Transverse colon (tissue), 4 donors: ENCODE measurements at regions of chr5 and their contacts with region 1.

Region 1: GRCh38 chr5:141691867-141692532 is 10.0 kb upstream of the ARAP3 start:
- DNase-seq: peak; percentile 91
- H3K4me3 ChIP-seq: peak overlapping the region in 2 of 4 donors; percentile 17 to 32
- H3K27ac ChIP-seq: no peak overlapping the region
- H3K4me1 ChIP-seq: peaks cover 4 to 12% (median 4%) of the 10 kb centered on the region in 4 donors
- H3K27me3 ChIP-seq: no peaks in the 10 kb centered on the region
- CTCF ChIP-seq: peak; percentile 98 to 100 (median 99)
- EP300 ChIP-seq: no peak
- POLR2A ChIP-seq: no peak

Region 2: GRCh38 chr5:140800816-140801493 is 891.0 kb before region 1 on chr5 and contains the start of gene PCDHA3:
- in situ Hi-C with region 1: no loop called
- intact Hi-C with region 1: no loop called
- DNase-seq: no peak
- H3K4me3 ChIP-seq: peak within 1 kb of the TSS in 2 of 4 donors; percentile 17 to 23
- H3K27ac ChIP-seq: peak within 1 kb of the TSS in 1 of 4 donors; percentile 11
- H3K4me1 ChIP-seq: no peaks in the 10 kb centered on the region
- H3K27me3 ChIP-seq: peaks cover 9% of the 10 kb centered on the region
- CTCF ChIP-seq: peak in 1 of 5 experiments; percentile 22
- EP300 ChIP-seq: no peak
- POLR2A ChIP-seq: no peak
- total RNA-seq, gene PCDHA3: 0.32 to 8.8 (median 0.41) TPM in 3 of 4 donors, not detected in the other

Region 3: DNA sequence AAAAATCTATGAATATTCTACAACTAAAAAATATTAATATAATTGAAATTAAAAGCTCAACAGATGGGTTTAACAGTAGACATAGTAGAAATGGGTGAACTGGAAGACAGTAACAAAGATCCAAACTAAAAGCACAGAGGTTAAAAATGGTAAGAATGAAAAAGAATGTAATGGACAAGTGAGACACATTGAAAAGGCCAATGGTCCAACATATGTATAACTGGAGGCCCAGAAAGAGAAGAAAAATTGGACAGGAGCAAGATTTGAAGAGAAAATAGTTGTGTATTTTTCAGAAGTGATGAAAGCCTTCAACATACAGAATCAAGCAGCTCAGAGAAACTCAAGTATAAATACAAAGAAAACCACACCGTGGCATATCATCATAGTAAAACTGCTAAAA is 144.5 kb before region 1 on chr5:
- in situ Hi-C with region 1: no loop called
- intact Hi-C with region 1: no loop called
- DNase-seq: no peak
- H3K4me3 ChIP-seq: no peak overlapping the region
- H3K27ac ChIP-seq: no peak overlapping the region
- H3K4me1 ChIP-seq: no peaks in the 10 kb centered on the region
- H3K27me3 ChIP-seq: no peaks in the 10 kb centered on the region
- CTCF ChIP-seq: no peak
- EP300 ChIP-seq: no peak
- POLR2A ChIP-seq: no peak

Region 4: DNA sequence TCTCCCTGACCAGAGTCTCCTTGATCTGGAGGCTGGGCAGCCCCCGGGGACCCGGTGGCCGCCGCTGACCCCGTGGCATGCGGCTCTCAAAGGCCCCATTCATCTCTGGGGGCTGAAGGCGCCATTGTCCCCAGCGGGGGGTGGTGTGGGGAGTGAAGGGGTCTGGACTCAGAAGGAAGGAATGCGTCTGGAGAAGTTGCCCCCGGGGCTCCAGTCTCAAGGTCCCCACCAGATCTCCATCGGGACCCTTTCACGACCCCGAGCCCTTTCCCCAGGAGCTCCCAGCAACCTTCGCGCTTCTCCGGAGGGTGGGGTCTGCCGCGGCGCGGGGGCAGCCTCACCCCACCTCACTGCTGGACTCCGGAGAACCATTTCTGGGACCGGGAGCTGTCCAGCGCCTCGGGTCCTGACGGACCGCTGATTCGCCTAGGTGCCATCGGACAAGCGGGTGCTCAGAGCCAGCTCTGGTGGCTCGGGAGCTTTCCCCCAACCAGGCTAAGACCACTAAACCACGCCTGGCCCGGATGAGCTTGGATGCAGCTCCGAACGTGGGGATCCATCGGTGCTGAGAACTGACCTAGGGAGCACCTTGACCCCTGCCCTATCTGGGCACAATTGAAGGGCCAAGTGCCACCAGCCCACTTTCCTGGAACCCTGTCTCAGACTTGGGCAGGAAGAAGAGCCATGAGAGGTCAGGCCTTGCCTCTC is 191.3 kb after region 1 on chr5:
- in situ Hi-C with region 1: no loop called
- intact Hi-C with region 1: no loop called
- DNase-seq: no peak
- H3K4me3 ChIP-seq: no peak overlapping the region
- H3K27ac ChIP-seq: no peak overlapping the region
- H3K4me1 ChIP-seq: peaks cover 0 to 23% (median 3%) of the 10 kb centered on the region in 4 donors
- H3K27me3 ChIP-seq: peaks cover 31% of the 10 kb centered on the region
- CTCF ChIP-seq: no peak
- EP300 ChIP-seq: no peak
- POLR2A ChIP-seq: no peak

Region 5: DNA sequence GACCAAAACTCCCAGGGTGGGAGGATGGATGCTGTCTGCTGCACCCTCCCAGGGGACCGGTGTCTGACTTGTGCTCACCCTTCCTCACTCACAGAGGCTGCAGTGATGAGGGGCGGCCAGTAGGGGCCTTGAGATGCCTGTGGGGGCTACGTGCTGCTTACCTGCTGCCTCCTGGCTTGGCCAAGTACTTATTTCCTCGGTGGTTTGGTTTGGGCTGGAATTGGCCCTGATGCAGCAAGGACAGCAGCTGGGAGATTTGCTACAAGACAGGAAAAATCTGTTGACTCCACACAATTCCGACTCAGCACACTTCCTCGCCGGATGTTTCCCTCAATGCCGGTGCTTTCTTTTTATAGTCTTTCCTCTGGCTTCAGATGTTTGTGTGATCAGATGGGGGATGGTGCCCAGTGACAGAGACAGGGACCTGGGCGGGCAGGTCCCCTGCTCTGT is 259.4 kb after region 1 on chr5:
- in situ Hi-C with region 1: loop called in 3 of 4 experiments (anchors 5 to 10 kb)
- intact Hi-C with region 1: loop called (anchors 5 kb)
- DNase-seq: no peak
- H3K4me3 ChIP-seq: no peak overlapping the region
- H3K27ac ChIP-seq: peak overlapping the region in 1 of 4 donors; percentile 32
- H3K4me1 ChIP-seq: no peaks in the 10 kb centered on the region
- H3K27me3 ChIP-seq: no peaks in the 10 kb centered on the region
- CTCF ChIP-seq: no peak
- EP300 ChIP-seq: no peak
- POLR2A ChIP-seq: no peak

Region 6: DNA sequence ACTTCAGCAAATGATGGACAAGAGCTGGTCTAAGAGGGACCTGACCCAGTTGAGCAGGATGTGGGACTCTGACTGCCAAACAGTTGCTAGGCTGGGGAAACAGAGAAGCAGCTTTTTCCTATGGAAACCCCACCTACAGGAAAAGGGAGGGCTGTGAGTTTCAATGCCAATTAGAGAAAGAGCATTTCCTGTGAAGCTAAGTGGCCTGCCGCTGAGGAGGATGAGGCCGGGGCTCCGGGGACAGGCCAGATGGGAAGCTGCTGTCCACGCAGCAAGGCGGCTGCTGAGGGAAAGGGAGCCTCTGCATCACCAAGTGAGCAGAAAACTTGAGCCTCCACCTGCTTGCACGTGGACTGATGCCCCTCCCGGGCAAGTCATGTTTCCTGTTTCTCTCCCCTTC is 266.1 kb after region 1 on chr5 and contains the start of gene PCDH12:
- in situ Hi-C with region 1: loop called (anchors 5 to 10 kb)
- intact Hi-C with region 1: loop called (anchors 5 kb)
- DNase-seq: peak; percentile 13
- H3K4me3 ChIP-seq: no peak within 1 kb of the TSS
- H3K27ac ChIP-seq: peak within 1 kb of the TSS in 2 of 4 donors; percentile 40 to 50
- H3K4me1 ChIP-seq: peaks cover 0 to 18% (median 3%) of the 10 kb centered on the region in 4 donors
- H3K27me3 ChIP-seq: no peaks in the 10 kb centered on the region
- CTCF ChIP-seq: no peak
- EP300 ChIP-seq: no peak
- POLR2A ChIP-seq: no peak
- total RNA-seq, gene PCDH12: 0.37 to 0.95 (median 0.68) TPM in 3 of 4 donors, not detected in the other

Region 7: GRCh38 chr5:141968914-141969608 is 277.1 kb after region 1 on chr5 and contains the start of gene RNF14:
- in situ Hi-C with region 1: loop called in 1 of 4 experiments (anchors 10 kb)
- intact Hi-C with region 1: no loop called
- DNase-seq: peak; percentile 95
- H3K4me3 ChIP-seq: peak within 1 kb of the TSS; percentile 59 to 81 (median 62)
- H3K27ac ChIP-seq: peak within 1 kb of the TSS; percentile 97 to 99 (median 98)
- H3K4me1 ChIP-seq: peaks cover 10 to 32% (median 16%) of the 10 kb centered on the region in 4 donors
- H3K27me3 ChIP-seq: no peaks in the 10 kb centered on the region
- CTCF ChIP-seq: peak; percentile 97 to 99 (median 98)
- EP300 ChIP-seq: no peak
- POLR2A ChIP-seq: peak; percentile 98
- total RNA-seq, gene RNF14: 15.3 to 66.7 (median 57.1) TPM

Region 8: GRCh38 chr5:142133330-142134206 is 441.6 kb after region 1 on chr5:
- in situ Hi-C with region 1: loop called (anchors 10 to 25 kb)
- intact Hi-C with region 1: no loop called
- DNase-seq: no peak
- H3K4me3 ChIP-seq: no peak overlapping the region
- H3K27ac ChIP-seq: no peak overlapping the region
- H3K4me1 ChIP-seq: peaks cover 0 to 7% (median 0%) of the 10 kb centered on the region in 4 donors
- H3K27me3 ChIP-seq: no peaks in the 10 kb centered on the region
- CTCF ChIP-seq: no peak
- EP300 ChIP-seq: no peak
- POLR2A ChIP-seq: no peak

Region 9: GRCh38 chr5:142145106-142145900 is 453.3 kb after region 1 on chr5:
- in situ Hi-C with region 1: loop called in 3 of 4 experiments (anchors 25 kb)
- intact Hi-C with region 1: no loop called
- DNase-seq: peak; percentile 61
- H3K4me3 ChIP-seq: no peak overlapping the region
- H3K27ac ChIP-seq: no peak overlapping the region
- H3K4me1 ChIP-seq: no peaks in the 10 kb centered on the region
- H3K27me3 ChIP-seq: no peaks in the 10 kb centered on the region
- CTCF ChIP-seq: peak; percentile 56 to 71 (median 65)
- EP300 ChIP-seq: no peak
- POLR2A ChIP-seq: no peak